GM12878 (cell line): ENCODE measurements at regions of chr18 and their contacts with region 1.

Region 1: GRCh38 chr18:58135701-58136331 is 91.8 kb downstream of the NEDD4L start:
- DNase-seq: peak; percentile 45
- ATAC-seq: peak; percentile 96
- H3K4me3 ChIP-seq: no peak overlapping the region
- H3K27ac ChIP-seq: no peak overlapping the region
- H3K4me1 ChIP-seq: no peaks in the 10 kb centered on the region
- H3K27me3 ChIP-seq: no peaks in the 10 kb centered on the region
- CTCF ChIP-seq: peak; percentile 79 to 92 (median 91)
- EP300 ChIP-seq: no peak
- POLR2A ChIP-seq: no peak
- RAD21 ChIP-seq: peak; percentile 75

Region 2: DNA sequence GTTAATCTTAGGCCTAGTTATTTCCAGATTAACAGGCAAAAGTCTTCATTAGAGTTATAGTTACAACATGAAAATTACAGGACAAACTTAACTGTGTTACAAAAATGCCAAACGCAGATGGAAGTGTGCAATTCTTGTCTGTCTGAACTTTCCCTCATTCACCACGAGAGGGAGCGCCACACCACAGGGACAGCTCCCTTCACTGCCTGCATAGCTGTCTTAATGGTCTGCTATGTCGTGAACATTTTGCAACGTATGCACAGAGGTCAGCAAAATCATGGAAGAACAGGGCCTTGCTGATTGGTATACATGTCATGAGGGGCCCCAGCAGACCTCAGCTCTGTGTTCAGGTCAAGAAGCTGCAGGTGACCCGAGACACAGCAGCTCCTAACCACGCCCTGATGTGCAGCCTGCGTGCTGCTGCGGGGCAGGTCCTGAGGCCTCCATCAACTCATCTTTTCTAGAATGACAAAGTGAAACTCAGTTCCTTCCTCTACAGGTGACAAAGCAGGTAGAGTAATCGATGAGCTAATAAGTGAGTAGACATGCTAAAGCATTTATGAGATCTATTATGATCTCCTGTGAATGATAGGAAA is 253.9 kb before region 1 on chr18:
- CTCF ChIA-PET with region 1: interaction called, 30 read pairs
- POLR2A ChIA-PET with region 1: no interaction called
- RAD21 ChIA-PET with region 1: interaction called, 6 read pairs
- SMC1A ChIA-PET with region 1: interaction called, 5 read pairs
- in situ Hi-C with region 1: no loop called
- intact Hi-C with region 1: loop called (anchors 5 kb)
- DNase-seq: peak; percentile 32
- ATAC-seq: peak; percentile 98
- H3K4me3 ChIP-seq: no peak overlapping the region
- H3K27ac ChIP-seq: no peak overlapping the region
- H3K4me1 ChIP-seq: no peaks in the 10 kb centered on the region
- H3K27me3 ChIP-seq: no peaks in the 10 kb centered on the region
- CTCF ChIP-seq: peak; percentile 89 to 94 (median 90); a peak in 5 of 6 replicates
- EP300 ChIP-seq: no peak
- POLR2A ChIP-seq: no peak
- RAD21 ChIP-seq: peak; percentile 93

Region 3: DNA sequence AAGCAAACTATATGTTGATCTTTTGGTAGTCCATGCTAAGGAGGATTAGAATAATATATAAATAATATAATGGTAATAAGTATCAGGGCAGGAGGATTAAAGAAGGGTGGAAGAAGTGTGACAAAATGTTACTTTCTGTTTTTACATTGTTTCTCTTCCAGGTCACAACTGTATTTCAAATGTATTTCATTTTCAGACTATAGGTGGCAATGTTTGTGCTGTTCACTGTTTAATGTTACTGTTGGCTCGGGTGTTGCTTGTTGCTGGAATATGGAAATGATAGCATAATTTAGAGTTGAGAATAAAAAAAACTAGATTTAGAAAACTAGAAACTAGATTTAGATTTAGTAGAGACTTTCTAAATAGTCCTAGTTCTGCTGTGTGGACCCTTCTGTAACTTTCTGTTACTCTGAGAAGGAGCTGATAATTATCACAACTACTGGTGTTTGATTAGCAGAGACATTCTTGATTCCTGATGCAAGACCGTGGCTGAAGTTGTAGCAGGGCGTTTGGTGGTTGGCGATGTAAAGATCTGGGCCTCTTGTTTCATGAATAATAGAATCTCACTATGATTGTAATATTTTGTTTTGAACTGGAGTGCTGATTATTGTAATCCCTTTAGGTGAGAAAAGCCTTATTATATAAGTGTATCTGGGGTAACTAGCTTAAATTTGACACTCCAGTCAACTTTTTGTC is 83.9 kb before region 1 on chr18:
- CTCF ChIA-PET with region 1: interaction called, 19 read pairs
- POLR2A ChIA-PET with region 1: interaction called, 4 read pairs
- RAD21 ChIA-PET with region 1: interaction called, 4 read pairs
- SMC1A ChIA-PET with region 1: interaction called, 12 read pairs
- in situ Hi-C with region 1: no loop called
- intact Hi-C with region 1: no loop called
- DNase-seq: no peak
- ATAC-seq: peak; percentile 91
- H3K4me3 ChIP-seq: no peak overlapping the region
- H3K27ac ChIP-seq: no peak overlapping the region
- H3K4me1 ChIP-seq: no peaks in the 10 kb centered on the region
- H3K27me3 ChIP-seq: no peaks in the 10 kb centered on the region
- CTCF ChIP-seq: peak; percentile 38 to 62 (median 41); a peak in 5 of 6 replicates
- EP300 ChIP-seq: no peak
- POLR2A ChIP-seq: no peak
- RAD21 ChIP-seq: peak; percentile 45; the same call in 1 of the 2 replicates

Region 4: GRCh38 chr18:58117786-58118403 is 17.9 kb before region 1 on chr18:
- CTCF ChIA-PET with region 1: interaction called, 31 read pairs
- POLR2A ChIA-PET with region 1: no interaction called
- RAD21 ChIA-PET with region 1: interaction called, 13 read pairs
- SMC1A ChIA-PET with region 1: interaction called, 7 read pairs
- in situ Hi-C with region 1: no loop called
- intact Hi-C with region 1: no loop called
- DNase-seq: no peak
- ATAC-seq: no peak
- H3K4me3 ChIP-seq: no peak overlapping the region
- H3K27ac ChIP-seq: no peak overlapping the region
- H3K4me1 ChIP-seq: peaks cover 9% of the 10 kb centered on the region
- H3K27me3 ChIP-seq: no peaks in the 10 kb centered on the region
- CTCF ChIP-seq: no peak
- EP300 ChIP-seq: no peak
- POLR2A ChIP-seq: no peak
- RAD21 ChIP-seq: no peak

Region 5: DNA sequence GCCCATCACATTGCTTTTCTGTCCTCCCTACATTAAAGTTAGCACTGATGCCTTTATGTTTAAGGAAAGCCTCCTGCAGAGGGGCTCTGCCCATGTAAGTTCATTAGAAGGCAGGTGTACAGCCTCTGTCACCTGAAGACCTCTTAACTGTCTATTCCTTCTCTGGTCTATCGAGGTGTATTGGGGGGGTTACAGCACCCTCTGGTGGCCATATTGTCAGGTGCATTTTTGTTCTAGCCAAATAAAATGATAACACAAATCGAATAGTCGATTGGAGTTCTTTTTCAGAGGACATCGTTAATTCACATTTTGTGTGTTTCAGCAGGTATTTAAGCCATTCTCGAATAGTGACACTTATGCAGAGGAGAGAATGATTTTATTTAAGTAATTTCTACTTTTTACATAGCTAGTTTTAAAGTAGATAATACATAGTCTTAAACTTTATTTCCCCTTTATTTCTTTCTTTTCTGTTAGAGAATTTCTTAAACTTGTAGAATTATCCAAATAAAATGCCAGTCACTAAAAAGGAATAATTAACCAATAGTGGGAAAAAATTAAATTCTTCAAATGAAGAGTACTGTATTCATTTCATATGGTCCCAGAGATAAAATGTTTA is 45.0 kb after region 1 on chr18:
- CTCF ChIA-PET with region 1: interaction called, 44 read pairs
- POLR2A ChIA-PET with region 1: no interaction called
- RAD21 ChIA-PET with region 1: interaction called, 10 read pairs
- SMC1A ChIA-PET with region 1: interaction called, 16 read pairs
- in situ Hi-C with region 1: no loop called
- intact Hi-C with region 1: no loop called
- DNase-seq: no peak
- ATAC-seq: peak; percentile 86
- H3K4me3 ChIP-seq: no peak overlapping the region
- H3K27ac ChIP-seq: no peak overlapping the region
- H3K4me1 ChIP-seq: no peaks in the 10 kb centered on the region
- H3K27me3 ChIP-seq: no peaks in the 10 kb centered on the region
- CTCF ChIP-seq: peak; percentile 78 to 87 (median 78)
- EP300 ChIP-seq: no peak
- POLR2A ChIP-seq: no peak
- RAD21 ChIP-seq: peak; percentile 79

Region 6: DNA sequence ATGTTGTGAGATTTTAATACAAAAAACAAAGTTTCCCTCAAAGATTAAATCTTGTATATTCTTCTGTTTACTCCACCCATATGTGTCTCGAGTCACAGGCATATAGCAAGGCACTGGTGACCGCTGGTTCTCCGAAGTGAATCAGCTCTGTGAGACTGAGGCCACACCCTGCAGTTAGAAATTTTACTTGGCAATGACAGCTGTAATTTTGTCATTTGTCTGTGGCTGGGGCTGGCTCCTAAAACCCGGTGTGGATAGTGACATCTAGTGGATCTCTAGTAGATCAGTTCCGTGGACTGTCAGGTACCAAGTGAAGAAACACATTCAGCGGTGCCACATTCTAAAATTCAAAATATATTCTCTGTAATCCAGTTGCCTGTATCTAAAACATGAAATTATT is 186.2 kb after region 1 on chr18:
- CTCF ChIA-PET with region 1: interaction called, 6 read pairs
- POLR2A ChIA-PET with region 1: no interaction called
- RAD21 ChIA-PET with region 1: interaction called, 8 read pairs
- SMC1A ChIA-PET with region 1: interaction called, 6 read pairs
- in situ Hi-C with region 1: no loop called
- intact Hi-C with region 1: loop called (anchors 2 kb)
- DNase-seq: no peak
- ATAC-seq: peak; percentile 96
- H3K4me3 ChIP-seq: no peak overlapping the region
- H3K27ac ChIP-seq: no peak overlapping the region
- H3K4me1 ChIP-seq: peaks cover 7% of the 10 kb centered on the region
- H3K27me3 ChIP-seq: no peaks in the 10 kb centered on the region
- CTCF ChIP-seq: peak; percentile 45 to 77 (median 56); a peak in 4 of 6 replicates
- EP300 ChIP-seq: no peak
- POLR2A ChIP-seq: no peak
- RAD21 ChIP-seq: peak; percentile 77

Region 7: DNA sequence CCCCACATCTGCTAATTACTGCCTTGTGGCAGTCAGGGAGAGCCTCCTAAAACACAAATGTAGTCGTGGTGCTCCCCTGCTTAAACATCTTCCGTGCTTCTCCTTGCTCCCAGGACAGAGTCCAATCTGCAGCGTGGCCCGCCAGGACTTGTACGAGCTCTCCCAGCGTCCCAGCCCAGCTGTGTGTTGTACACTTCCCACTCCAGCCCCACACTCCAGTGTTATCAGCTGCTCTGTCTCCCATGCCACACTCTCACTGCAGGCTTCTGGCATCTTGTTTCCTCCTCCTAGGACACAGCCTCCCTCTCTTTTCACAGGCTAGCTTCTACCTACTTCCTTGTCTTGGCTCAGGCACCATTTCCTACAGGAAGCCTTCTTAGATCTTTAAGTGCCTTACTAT is 293.6 kb after region 1 on chr18:
- CTCF ChIA-PET with region 1: no interaction called
- POLR2A ChIA-PET with region 1: no interaction called
- RAD21 ChIA-PET with region 1: no interaction called
- SMC1A ChIA-PET with region 1: no interaction called
- in situ Hi-C with region 1: no loop called
- intact Hi-C with region 1: no loop called
- DNase-seq: no peak
- ATAC-seq: no peak
- H3K4me3 ChIP-seq: no peak overlapping the region
- H3K27ac ChIP-seq: no peak overlapping the region
- H3K4me1 ChIP-seq: no peaks in the 10 kb centered on the region
- H3K27me3 ChIP-seq: no peaks in the 10 kb centered on the region
- CTCF ChIP-seq: no peak
- EP300 ChIP-seq: no peak
- POLR2A ChIP-seq: no peak
- RAD21 ChIP-seq: no peak

Region 8: DNA sequence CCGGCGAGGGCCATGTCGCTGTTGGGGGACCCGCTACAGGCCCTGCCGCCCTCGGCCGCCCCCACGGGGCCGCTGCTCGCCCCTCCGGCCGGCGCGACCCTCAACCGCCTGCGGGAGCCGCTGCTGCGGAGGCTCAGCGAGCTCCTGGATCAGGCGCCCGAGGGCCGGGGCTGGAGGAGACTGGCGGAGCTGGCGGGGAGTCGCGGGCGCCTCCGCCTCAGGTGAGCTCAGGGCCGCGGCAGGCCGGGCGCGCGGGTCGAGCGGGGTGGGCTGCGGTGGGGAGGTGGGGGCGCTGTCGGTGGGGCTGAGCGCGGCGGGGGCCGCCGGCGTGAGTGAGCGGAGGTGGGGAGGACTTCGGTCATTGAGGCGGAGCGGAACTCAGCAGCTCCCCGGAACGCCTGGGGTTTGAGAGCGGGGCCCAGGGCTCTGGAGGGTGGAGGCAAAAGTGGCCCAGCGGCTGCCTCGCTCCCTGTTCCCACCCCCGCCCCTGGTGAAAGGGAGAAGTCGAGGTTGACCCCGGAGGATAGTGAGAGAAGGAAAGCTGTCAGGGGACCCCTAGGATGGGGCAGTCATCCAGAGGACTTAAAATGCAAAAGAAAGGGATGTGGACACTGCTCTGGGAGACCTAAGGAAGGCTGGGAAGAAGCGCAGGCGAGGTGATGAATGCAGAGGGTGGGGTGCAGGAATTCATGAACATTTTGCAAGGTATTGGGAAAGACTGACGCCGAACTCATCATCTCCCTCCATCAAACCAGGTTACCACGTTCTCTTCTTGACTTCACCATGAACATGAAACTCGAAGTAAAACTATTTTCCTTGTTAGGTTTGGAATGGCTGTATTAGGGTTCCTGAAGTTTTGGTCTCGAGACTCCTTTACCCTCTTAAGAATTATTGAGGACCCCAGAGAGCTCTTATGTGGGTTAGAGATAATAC is 536.1 kb after region 1 on chr18:
- CTCF ChIA-PET with region 1: no interaction called
- POLR2A ChIA-PET with region 1: no interaction called
- RAD21 ChIA-PET with region 1: no interaction called
- SMC1A ChIA-PET with region 1: no interaction called
- in situ Hi-C with region 1: no loop called
- intact Hi-C with region 1: no loop called
- DNase-seq: no peak
- ATAC-seq: peak; percentile 20
- H3K4me3 ChIP-seq: peak overlapping the region; percentile 95
- H3K27ac ChIP-seq: peak overlapping the region; percentile 92
- H3K4me1 ChIP-seq: peaks cover 13% of the 10 kb centered on the region; the same call in 1 of the 2 replicates
- H3K27me3 ChIP-seq: no peaks in the 10 kb centered on the region
- CTCF ChIP-seq: no peak
- EP300 ChIP-seq: no peak
- POLR2A ChIP-seq: no peak
- RAD21 ChIP-seq: no peak; the same call in 1 of the 2 replicates